Right ventricle myocardium inferior (tissue), 1 donor: ENCODE measurements at regions of chr16 and their contacts with region 1.

Region 1: GRCh38 chr16:20849587-20850390 is 43.5 kb downstream of the REXO5 start:
- DNase-seq: no peak
- ATAC-seq: no peak

Region 2: DNA sequence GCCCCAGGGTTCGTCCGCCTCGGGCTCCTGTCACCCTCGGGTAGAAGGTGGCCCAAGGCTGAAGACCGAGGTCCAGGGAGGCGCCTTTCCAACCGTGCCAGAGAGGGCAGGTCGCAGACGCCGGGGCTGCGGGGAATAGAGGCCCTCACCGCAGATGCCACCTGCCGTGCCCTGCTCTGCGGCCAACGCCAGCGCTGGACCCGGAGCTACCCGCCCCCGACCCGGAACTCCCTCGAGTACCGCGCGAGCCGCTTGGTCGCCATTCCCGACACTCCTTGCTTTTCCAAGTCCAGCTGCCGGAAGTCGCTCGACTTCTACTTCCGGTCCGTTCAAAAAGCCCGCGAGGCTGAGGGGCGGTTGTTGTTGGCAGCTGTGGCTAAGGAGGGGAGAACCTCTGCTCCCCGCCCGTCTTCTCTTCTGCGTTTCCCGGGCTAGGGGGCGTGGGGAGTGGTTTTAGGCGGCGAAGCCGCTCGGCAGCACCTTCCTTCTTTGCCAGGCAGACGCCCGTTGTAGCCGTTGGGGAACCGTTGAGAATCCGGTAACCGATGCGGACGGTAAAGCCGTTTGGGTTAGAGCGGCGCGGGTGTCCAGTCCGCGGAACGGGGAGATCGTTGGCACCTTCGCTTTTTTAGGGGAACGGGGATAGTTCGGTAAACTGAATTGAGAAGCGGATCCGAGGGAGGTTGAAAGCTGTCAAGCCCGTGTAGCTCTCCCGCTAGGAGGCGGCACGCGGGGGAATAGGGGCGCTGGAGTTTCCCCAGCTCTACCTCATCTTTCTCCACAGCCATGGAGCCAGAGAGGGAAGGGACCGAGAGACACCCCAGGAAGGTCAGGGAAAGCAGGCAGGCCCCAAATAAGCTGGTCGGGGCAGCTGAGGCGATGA is 43.4 kb before region 1 on chr16 and contains the starts of genes ERI2 and REXO5:
- intact Hi-C with region 1: loop called (anchors 2 kb)
- DNase-seq: peak; percentile 93
- ATAC-seq: peak; percentile 94
- total RNA-seq, gene ERI2: 9.1 TPM
- total RNA-seq, gene REXO5: 5.8 TPM

Region 3: DNA sequence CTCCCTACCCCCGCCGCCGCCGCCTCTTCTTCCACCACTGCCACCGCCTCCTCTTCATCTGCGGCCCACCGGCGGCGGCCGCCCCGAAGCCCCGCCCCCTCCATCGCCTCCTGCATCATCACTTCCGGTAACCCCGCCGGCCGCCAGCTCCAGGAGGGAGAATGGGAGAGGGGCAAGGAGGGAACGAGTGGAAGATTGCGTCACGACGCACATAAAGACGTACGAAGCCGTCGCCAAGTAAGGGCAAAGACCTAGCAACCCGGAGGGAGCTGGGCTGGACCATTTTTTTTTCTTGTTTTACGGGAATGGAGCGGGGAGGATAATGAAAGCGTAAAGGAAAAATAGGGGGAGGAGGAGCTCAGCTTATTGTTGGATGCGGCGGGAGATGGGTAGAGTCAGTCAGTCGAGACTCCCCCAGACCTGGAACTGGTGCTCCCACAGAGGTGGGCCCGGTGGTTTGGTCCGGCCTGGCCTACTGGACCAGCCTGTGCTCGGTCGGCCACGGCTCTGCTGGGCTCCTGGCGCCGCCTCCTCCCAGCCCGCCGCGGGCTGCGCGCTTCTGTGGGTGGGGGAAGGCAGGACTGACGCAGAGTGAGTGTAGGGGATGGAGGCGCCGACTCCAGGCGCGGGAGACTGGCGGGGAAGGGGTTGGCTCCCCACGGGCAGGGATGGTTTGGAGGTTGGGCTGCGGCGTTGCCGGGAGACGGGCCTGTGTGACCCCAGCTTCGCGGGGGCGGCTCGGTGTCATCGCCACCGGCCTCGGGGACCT is 50.7 kb after region 1 on chr16 and contains the starts of genes DCUN1D3 and LYRM1:
- intact Hi-C with region 1: loop called (anchors 1 kb)
- DNase-seq: peak; percentile 98
- ATAC-seq: peak; percentile 94
- total RNA-seq, gene DCUN1D3: 15.8 TPM
- total RNA-seq, gene LYRM1: 58.1 TPM

Region 4: GRCh38 chr16:20944861-20945574 is 95.2 kb after region 1 on chr16:
- intact Hi-C with region 1: loop called (anchors 2 kb)
- DNase-seq: no peak
- ATAC-seq: peak; percentile 42

Region 5: DNA sequence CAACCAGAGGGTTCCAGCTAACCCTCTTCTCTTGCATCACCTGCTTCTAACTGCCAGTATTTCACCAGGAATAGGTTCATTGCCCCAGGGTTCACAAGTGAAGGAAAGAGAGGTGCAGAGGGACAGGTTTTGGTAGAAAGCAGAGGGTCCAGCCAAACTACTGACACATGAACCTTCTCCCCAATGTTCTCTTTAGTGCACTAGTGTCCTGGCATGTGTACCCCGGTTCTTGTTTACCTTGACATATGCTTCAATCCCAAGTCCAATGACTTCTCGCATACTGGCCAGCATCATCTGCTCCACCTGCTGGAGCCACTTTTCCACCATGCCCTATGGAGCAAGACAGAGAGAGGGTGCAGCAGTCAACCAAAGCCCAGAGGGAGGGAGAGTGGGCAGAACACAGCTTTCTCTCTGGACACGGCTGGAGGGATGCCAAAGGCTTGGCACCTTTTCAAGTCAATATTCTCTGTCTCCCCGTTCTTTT is 210.3 kb after region 1 on chr16:
- intact Hi-C with region 1: no loop called
- DNase-seq: no peak
- ATAC-seq: no peak

Region 6: DNA sequence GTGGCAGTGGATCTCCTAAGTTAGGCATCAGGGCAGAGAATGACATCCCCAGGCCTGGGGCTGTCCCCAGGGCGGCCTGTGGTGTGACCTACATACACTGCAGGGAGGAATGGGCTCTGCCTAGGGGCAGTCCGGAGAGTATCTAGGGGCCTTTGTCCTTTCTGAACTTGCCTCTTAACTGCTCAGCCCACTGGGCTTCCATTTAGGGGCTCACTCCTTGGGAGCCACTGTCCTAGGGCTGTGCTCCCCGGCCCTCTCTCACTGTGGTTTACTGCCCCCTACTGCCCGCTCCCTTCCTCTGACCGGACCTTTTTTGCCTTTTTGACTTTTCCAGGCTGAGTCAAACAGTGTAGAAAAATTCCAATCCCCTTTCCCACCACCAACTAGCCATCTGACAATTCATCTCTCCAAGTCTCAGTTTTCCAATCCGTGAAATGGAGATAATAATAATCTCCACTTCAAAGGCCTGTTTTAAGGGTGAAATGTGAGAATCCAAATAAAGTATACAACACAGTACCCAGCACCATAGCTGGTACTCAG is 234.0 kb after region 1 on chr16:
- intact Hi-C with region 1: loop called (anchors 1 kb)
- DNase-seq: peak; percentile 72
- ATAC-seq: peak; percentile 93